Activated CD4-positive, alpha-beta memory T cell treated with anti-CD3 and anti-CD28 coated beads for 36 hours (primary cell): ENCODE measurements at regions of chr11 and their contacts with region 1.

Region 1: GRCh38 chr11:60906132-60906972 is at the start of gene PRPF19:
- DNase-seq: peak; percentile 100
- H3K4me3 Mint-ChIP-seq: peak within 1 kb of the TSS; percentile 90
- H3K27ac Mint-ChIP-seq: peak within 1 kb of the TSS; percentile 94
- H3K4me1 Mint-ChIP-seq: peaks cover 36% of the 10 kb centered on the region
- H3K27me3 Mint-ChIP-seq: no peaks in the 10 kb centered on the region
- total RNA-seq, gene PRPF19: 127 to 139 TPM

Region 2: GRCh38 chr11:60841797-60842667 is 64.3 kb before region 1 on chr11 and contains the start of gene CCDC86:
- CTCF ChIA-PET with region 1: interaction called, 3 read pairs
- POLR2A ChIA-PET with region 1: interaction called, 4 read pairs
- intact Hi-C with region 1: loop called (anchors 1 kb)
- DNase-seq: peak; percentile 99
- H3K4me3 Mint-ChIP-seq: peak within 1 kb of the TSS; percentile 88
- H3K27ac Mint-ChIP-seq: peak within 1 kb of the TSS; percentile 85
- H3K4me1 Mint-ChIP-seq: peaks cover 36% of the 10 kb centered on the region
- H3K27me3 Mint-ChIP-seq: no peaks in the 10 kb centered on the region
- total RNA-seq, gene CCDC86: 40.6 to 42.1 TPM

Region 3: GRCh38 chr11:60923326-60923725 is 17.0 kb after region 1 on chr11:
- CTCF ChIA-PET with region 1: no interaction called
- POLR2A ChIA-PET with region 1: no interaction called
- intact Hi-C with region 1: no loop called
- DNase-seq: no peak
- H3K4me3 Mint-ChIP-seq: no peak overlapping the region
- H3K27ac Mint-ChIP-seq: no peak overlapping the region
- H3K4me1 Mint-ChIP-seq: peaks cover 32% of the 10 kb centered on the region
- H3K27me3 Mint-ChIP-seq: peaks cover 23% of the 10 kb centered on the region

Region 4: DNA sequence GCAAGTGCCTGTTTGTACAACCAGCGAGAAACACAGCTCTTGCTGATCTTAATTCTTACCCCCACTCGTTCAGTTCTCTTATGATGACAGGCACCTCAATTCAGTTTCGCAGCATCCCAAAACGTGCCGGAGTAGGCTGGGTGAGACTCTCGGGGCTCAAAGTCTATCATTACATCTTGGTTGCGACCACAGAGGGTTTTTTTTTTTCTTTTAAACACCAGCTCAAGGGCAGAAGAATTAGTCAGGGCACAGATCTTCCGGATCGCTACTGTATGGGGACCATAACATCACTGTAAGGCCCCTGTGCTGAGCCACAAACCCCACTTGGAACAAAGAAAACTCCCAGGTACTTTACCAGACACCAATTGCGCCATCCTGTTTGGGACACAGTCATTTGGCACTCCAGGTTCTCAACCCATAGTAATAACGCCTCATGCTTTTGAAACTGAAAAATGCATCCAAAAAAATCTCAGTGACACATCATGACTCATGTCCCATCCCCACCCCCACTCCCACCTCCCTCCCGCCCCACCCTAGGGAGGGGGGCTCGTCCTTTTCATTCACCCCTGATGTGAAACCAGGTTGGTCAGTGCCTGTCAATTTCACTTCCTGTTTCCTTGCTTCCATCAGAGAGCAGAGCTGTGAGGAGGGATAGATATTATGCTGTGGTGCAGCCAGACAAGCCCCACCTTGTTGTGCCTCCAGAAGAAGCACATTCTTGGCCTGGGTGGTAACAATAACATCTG is 154.9 kb after region 1 on chr11:
- CTCF ChIA-PET with region 1: no interaction called
- POLR2A ChIA-PET with region 1: no interaction called
- intact Hi-C with region 1: no loop called
- DNase-seq: peak; percentile 94
- H3K4me3 Mint-ChIP-seq: peak overlapping the region; percentile 67
- H3K27ac Mint-ChIP-seq: peak overlapping the region; percentile 98
- H3K4me1 Mint-ChIP-seq: peaks cover 92% of the 10 kb centered on the region
- H3K27me3 Mint-ChIP-seq: no peaks in the 10 kb centered on the region